Motor neuron (in vitro differentiated cells): ENCODE measurements at regions of chr7 and their contacts with region 1.

Region 1: DNA sequence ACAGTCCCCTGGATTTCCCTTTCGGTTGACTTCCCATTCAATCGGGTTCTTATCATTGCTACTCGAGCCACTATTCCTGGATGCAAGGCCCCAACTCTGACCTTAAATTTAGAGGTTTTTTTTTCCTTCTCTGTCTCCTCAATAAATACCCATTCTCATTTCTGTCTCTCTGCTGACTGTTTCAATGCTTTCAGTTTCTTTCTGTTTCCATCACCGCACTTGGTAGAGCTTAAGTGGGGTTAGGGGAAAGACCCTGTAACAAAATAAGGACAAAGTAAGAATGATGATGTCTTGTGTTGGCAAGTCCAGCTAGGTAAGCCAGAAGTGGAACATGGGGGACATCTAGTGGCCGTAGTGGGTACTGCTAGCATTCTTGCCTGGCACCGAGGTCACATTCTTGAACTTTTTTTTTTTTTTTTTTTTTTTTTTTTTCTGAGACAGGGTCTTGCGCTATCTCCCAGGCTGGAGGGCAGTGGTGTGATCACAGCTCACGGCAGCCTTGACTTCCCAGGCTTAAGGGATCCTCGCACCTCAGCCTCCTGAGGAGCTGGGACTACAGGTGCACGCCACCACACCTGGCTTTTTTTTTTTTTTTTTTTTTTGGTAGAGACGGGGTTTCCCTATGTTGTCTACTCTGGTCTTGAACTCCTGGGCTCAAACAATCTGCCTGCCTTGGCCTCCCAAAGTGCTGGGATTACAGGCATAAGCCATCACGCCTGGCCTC is 40.3 kb downstream of the ZC3HC1 start:
- ATAC-seq: peak; percentile 7 to 80 (median 68)
- H3K4me3 ChIP-seq: no peak overlapping the region
- H3K27ac ChIP-seq: no peak overlapping the region
- H3K4me1 ChIP-seq: no peaks in the 10 kb centered on the region

Region 2: GRCh38 chr7:129664029-129665012 is 346.5 kb before region 1 on chr7:
- in situ Hi-C with region 1: loop called in 3 of 9 experiments (anchors 25 kb)
- ATAC-seq: peak in 5 of 8 experiments; percentile 36 to 66 (median 50)
- H3K4me3 ChIP-seq: no peak overlapping the region
- H3K27ac ChIP-seq: no peak overlapping the region
- H3K4me1 ChIP-seq: no peaks in the 10 kb centered on the region

Region 3: GRCh38 chr7:129684777-129685176 is 326.1 kb before region 1 on chr7:
- in situ Hi-C with region 1: loop called in 2 of 9 experiments (anchors 25 kb)
- ATAC-seq: peak in 1 of 8 experiments; percentile 43
- H3K4me3 ChIP-seq: no peak overlapping the region
- H3K27ac ChIP-seq: no peak overlapping the region
- H3K4me1 ChIP-seq: no peaks in the 10 kb centered on the region

Region 4: DNA sequence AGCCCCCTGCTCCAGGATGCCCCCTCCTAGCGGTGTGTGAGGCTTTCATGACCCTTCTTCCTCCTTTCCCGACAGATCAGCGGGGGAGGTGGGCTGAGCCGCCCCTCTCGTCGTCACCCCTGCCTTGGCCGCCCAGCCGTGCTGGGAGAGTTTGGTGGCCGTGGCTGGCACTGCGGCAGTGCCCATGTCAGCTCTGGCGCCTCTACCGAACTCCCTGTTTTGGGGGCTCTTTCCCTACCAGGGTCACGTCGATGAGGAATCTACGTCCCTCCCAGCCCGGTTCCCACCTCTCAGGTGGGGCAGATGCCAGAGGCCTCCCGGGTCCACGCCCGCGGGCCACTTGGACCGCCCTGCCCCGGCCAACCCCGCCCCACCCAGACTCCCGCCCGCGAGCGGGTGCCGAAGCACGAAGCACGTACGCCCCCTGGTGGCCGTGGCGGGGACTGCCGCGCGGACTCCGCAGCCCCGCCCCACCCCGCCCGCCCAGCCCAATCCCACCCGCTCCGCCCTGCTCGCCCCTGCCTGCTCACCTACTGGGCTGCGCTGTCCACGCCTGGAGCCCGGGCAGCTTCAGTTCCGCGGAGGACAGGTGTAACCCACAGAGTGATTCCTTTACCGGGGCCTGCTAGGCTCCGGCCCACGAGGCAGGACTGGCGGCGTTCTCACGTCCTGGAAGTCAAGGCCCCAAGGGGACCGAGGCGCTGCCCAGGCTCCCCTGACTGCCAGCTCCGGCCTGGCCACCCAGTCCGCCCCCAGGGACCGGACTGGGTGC is 185.2 kb before region 1 on chr7:
- in situ Hi-C with region 1: loop called in 3 of 9 experiments (anchors 10 to 25 kb)
- ATAC-seq: peak; percentile 51 to 75 (median 70)
- H3K4me3 ChIP-seq: peak overlapping the region; percentile 35 to 54 (median 43)
- H3K27ac ChIP-seq: peak overlapping the region in 1 of 2 donors; percentile 49
- H3K4me1 ChIP-seq: peaks cover 0 to 5% of the 10 kb centered on the region in 2 donors